Naive thymus-derived CD8-positive, alpha-beta T cell (primary cell): ENCODE measurements at regions of chr5 and their contacts with region 1.

Region 1: GRCh38 chr5:134411546-134412266 is at the start of gene CDKN2AIPNL:
- DNase-seq: peak; percentile 77 to 94 (median 88)
- ATAC-seq: peak; percentile 99
- H3K4me3 Mint-ChIP-seq: peak within 1 kb of the TSS; percentile 88 to 95 (median 93)
- H3K27ac Mint-ChIP-seq: peak within 1 kb of the TSS; percentile 85 to 96 (median 92)
- H3K4me1 Mint-ChIP-seq: peaks cover 16 to 41% (median 36%) of the 10 kb centered on the region in 4 donors
- H3K27me3 Mint-ChIP-seq: no peaks in the 10 kb centered on the region
- polyA plus RNA-seq, gene CDKN2AIPNL: 28.0 to 34.2 (median 33.6) TPM

Region 2: GRCh38 chr5:134370871-134371833 is 40.6 kb before region 1 on chr5 and contains the start of gene UBE2B:
- POLR2A ChIA-PET with region 1: interaction called, 22 read pairs
- DNase-seq: peak; percentile 94 to 99 (median 97)
- ATAC-seq: peak; percentile 68 to 75
- H3K4me3 Mint-ChIP-seq: peak within 1 kb of the TSS; percentile 88 to 99 (median 98)
- H3K27ac Mint-ChIP-seq: peak within 1 kb of the TSS; percentile 91 to 100 (median 100)
- H3K4me1 Mint-ChIP-seq: peaks cover 22 to 70% (median 61%) of the 10 kb centered on the region in 4 donors
- H3K27me3 Mint-ChIP-seq: peaks cover 0 to 3% (median 0%) of the 10 kb centered on the region in 5 donors
- polyA plus RNA-seq, gene UBE2B: 55.2 to 80.3 (median 77.6) TPM

Region 3: DNA sequence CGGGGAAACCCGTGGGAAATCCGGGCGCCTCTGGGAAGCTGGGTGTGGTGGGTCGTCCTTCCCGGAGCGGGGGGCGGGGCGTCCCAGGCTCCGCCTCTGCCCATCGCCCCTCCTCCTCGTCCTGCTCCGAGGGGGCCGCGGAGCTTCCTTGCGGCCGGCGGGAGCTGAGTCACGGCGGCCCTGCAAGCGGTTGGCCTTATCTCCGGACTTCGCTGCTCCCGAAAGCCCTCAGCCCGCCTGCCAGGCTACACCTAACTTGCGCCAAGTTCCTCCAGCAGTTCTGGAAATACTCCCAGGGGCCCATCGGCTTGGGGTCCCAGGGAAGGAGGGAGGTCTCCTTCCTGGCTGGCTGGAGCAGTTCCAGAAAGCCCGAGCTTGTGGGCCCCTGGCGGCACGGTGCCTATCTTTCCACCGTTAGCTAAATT is 54.1 kb after region 1 on chr5:
- POLR2A ChIA-PET with region 1: interaction called, 18 read pairs
- DNase-seq: peak in 8 of 10 donors; percentile 10 to 49 (median 36)
- ATAC-seq: peak; percentile 59 to 70
- H3K4me3 Mint-ChIP-seq: peak overlapping the region; percentile 78 to 89 (median 86)
- H3K27ac Mint-ChIP-seq: peak overlapping the region; percentile 81 to 92 (median 87)
- H3K4me1 Mint-ChIP-seq: peaks cover 7 to 33% (median 23%) of the 10 kb centered on the region in 4 donors
- H3K27me3 Mint-ChIP-seq: no peaks in the 10 kb centered on the region

Region 4: GRCh38 chr5:134600600-134600999 is 188.9 kb after region 1 on chr5:
- POLR2A ChIA-PET with region 1: interaction called, 11 read pairs
- DNase-seq: no peak
- ATAC-seq: no peak
- H3K4me3 Mint-ChIP-seq: no peak overlapping the region
- H3K27ac Mint-ChIP-seq: peak overlapping the region in 4 of 10 donors; percentile 8 to 88 (median 76)
- H3K4me1 Mint-ChIP-seq: no peaks in the 10 kb centered on the region
- H3K27me3 Mint-ChIP-seq: no peaks in the 10 kb centered on the region